ENCODE measurements at regions of chr1 and their contacts with region 1.

Region 1: GRCh38 chr1:203475012-203475981 is at the start of gene PRELP:
- DNase-seq: peak; percentile 56 to 67
- ATAC-seq: peak; percentile 60 to 64
- H3K4me3 ChIP-seq: peak within 1 kb of the TSS; percentile 35 to 51 (median 42)
- H3K27ac ChIP-seq: peak within 1 kb of the TSS; percentile 67 to 77 (median 73)
- H3K4me1 ChIP-seq: no peaks in the 10 kb centered on the region
- H3K27me3 ChIP-seq: no peaks in the 10 kb centered on the region
- CTCF ChIP-seq: no peak
- POLR2A ChIP-seq: peak in 1 of 2 donors; percentile 50
- total RNA-seq, gene PRELP: 12.2 to 32.6 (median 16.9) TPM

Region 2: DNA sequence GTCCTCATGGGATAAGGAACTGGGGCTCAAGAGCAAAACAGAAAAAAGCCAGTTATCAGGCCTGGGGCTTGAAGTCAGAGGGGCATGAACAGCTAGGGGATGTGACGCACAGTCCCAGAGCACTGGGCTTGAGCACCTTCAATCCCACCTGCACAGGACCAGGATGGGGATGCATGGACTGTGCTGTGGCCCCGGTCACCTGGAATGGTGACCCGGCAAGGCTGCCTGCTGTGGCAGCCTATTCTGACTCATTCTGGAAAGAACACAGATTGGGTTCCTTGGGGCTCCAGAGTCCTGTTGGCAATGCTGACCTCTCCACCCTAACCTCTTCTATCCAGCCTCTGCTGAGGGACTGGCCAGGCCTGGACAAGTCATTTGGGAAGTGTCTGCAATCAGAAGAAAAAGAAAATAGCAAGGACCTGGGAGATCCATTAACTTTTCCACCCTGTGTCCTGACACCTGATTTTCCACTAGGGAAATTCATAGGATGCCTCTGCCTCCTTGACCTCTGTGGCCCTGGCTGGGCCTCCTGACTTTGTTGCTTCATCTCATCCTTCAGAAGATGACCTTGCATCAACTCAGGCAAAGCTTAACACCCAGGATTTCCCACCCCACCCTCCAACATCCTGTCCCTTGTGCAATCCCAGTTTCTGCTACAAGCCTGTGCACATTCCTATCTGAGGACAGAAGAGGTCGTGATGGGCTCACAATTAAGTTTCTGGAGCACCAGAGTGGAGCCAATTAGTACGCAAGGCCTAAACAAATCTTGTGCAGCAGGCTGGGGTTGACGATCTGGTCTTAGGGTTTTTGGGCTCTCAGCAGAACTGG is 106.5 kb before region 1 on chr1:
- in situ Hi-C with region 1: loop called in 1 of 4 experiments (anchors 10 kb)
- intact Hi-C with region 1: no loop called
- DNase-seq: peak; percentile 75 to 83
- ATAC-seq: peak; percentile 89 to 91
- H3K4me3 ChIP-seq: no peak overlapping the region
- H3K27ac ChIP-seq: peak overlapping the region; percentile 37 to 59 (median 48)
- H3K4me1 ChIP-seq: peaks cover 0 to 7% of the 10 kb centered on the region in 2 donors
- H3K27me3 ChIP-seq: no peaks in the 10 kb centered on the region
- CTCF ChIP-seq: peak in 2 of 5 experiments; percentile 3 to 17
- POLR2A ChIP-seq: no peak

Measured in gastrocnemius medialis (tissue), 4 donors.